ENCODE measurements at regions of chr19 and their contacts with region 1.

Region 1: GRCh38 chr19:33778089-33778791 is 18.4 kb upstream of the KCTD15 start:
- DNase-seq: peak; percentile 69 to 92 (median 81)
- ATAC-seq: peak; percentile 97
- H3K4me3 ChIP-seq: no peak overlapping the region
- H3K4me3 Mint-ChIP-seq: no peak overlapping the region
- H3K27ac ChIP-seq: no peak overlapping the region
- H3K27ac Mint-ChIP-seq: no peak overlapping the region
- H3K4me1 ChIP-seq: peaks cover 31% of the 10 kb centered on the region
- H3K4me1 Mint-ChIP-seq: peaks cover 18% of the 10 kb centered on the region
- H3K27me3 ChIP-seq: peaks cover 8 to 19% of the 10 kb centered on the region in 2 experiments
- H3K27me3 Mint-ChIP-seq: peaks cover 36% of the 10 kb centered on the region
- CTCF ChIP-seq: peak; percentile 100

Region 2: GRCh38 chr19:33416307-33417215 is 361.7 kb before region 1 on chr19:
- CTCF ChIA-PET with region 1: interaction called, 11 read pairs
- POLR2A ChIA-PET with region 1: no interaction called
- intact Hi-C with region 1: no loop called
- DNase-seq: peak; percentile 43 to 80 (median 64)
- ATAC-seq: peak; percentile 85
- H3K4me3 ChIP-seq: peak overlapping the region; percentile 42
- H3K4me3 Mint-ChIP-seq: peak overlapping the region; percentile 47
- H3K27ac ChIP-seq: no peak overlapping the region
- H3K27ac Mint-ChIP-seq: no peak overlapping the region
- H3K4me1 ChIP-seq: peaks cover 9% of the 10 kb centered on the region
- H3K4me1 Mint-ChIP-seq: peaks cover 4% of the 10 kb centered on the region
- H3K27me3 ChIP-seq: no peaks in the 10 kb centered on the region
- H3K27me3 Mint-ChIP-seq: no peaks in the 10 kb centered on the region
- CTCF ChIP-seq: peak; percentile 76

Region 3: GRCh38 chr19:33749619-33750175 is 28.5 kb before region 1 on chr19:
- CTCF ChIA-PET with region 1: no interaction called
- POLR2A ChIA-PET with region 1: no interaction called
- intact Hi-C with region 1: no loop called
- DNase-seq: no peak
- ATAC-seq: no peak
- H3K4me3 ChIP-seq: no peak overlapping the region
- H3K4me3 Mint-ChIP-seq: no peak overlapping the region
- H3K27ac ChIP-seq: no peak overlapping the region
- H3K27ac Mint-ChIP-seq: no peak overlapping the region
- H3K4me1 ChIP-seq: no peaks in the 10 kb centered on the region
- H3K4me1 Mint-ChIP-seq: no peaks in the 10 kb centered on the region
- H3K27me3 ChIP-seq: peaks cover 4 to 5% of the 10 kb centered on the region in 2 experiments
- H3K27me3 Mint-ChIP-seq: peaks cover 23% of the 10 kb centered on the region
- CTCF ChIP-seq: no peak

Region 4: GRCh38 chr19:33795370-33796163 is 17.3 kb after region 1 on chr19:
- CTCF ChIA-PET with region 1: interaction called, 27 read pairs
- POLR2A ChIA-PET with region 1: interaction called, 4 read pairs
- intact Hi-C with region 1: no loop called
- DNase-seq: peak in 7 of 14 experiments; percentile 23 to 67 (median 33)
- ATAC-seq: peak; percentile 44
- H3K4me3 ChIP-seq: peak overlapping the region; percentile 44
- H3K4me3 Mint-ChIP-seq: peak overlapping the region; percentile 71
- H3K27ac ChIP-seq: no peak overlapping the region
- H3K27ac Mint-ChIP-seq: no peak overlapping the region
- H3K4me1 ChIP-seq: peaks cover 31% of the 10 kb centered on the region
- H3K4me1 Mint-ChIP-seq: no peaks in the 10 kb centered on the region
- H3K27me3 ChIP-seq: peaks cover 19 to 37% of the 10 kb centered on the region in 2 experiments
- H3K27me3 Mint-ChIP-seq: peaks cover 50% of the 10 kb centered on the region
- CTCF ChIP-seq: peak; percentile 39

Region 5: GRCh38 chr19:33998739-33999345 is 220.6 kb after region 1 on chr19:
- CTCF ChIA-PET with region 1: interaction called, 11 read pairs
- POLR2A ChIA-PET with region 1: no interaction called
- intact Hi-C with region 1: loop called (anchors 2 to 5 kb)
- DNase-seq: peak in 1 of 14 experiments; percentile 10
- ATAC-seq: no peak
- H3K4me3 ChIP-seq: no peak overlapping the region
- H3K4me3 Mint-ChIP-seq: no peak overlapping the region
- H3K27ac ChIP-seq: no peak overlapping the region
- H3K27ac Mint-ChIP-seq: no peak overlapping the region
- H3K4me1 ChIP-seq: no peaks in the 10 kb centered on the region
- H3K4me1 Mint-ChIP-seq: no peaks in the 10 kb centered on the region
- H3K27me3 ChIP-seq: peaks cover 0 to 4% of the 10 kb centered on the region in 2 experiments
- H3K27me3 Mint-ChIP-seq: peaks cover 28% of the 10 kb centered on the region
- CTCF ChIP-seq: peak; percentile 40

Region 6: GRCh38 chr19:34096020-34096915 is 318.0 kb after region 1 on chr19:
- CTCF ChIA-PET with region 1: interaction called, 28 read pairs
- POLR2A ChIA-PET with region 1: no interaction called
- intact Hi-C with region 1: loop called (anchors 1 kb)
- DNase-seq: peak in 3 of 14 experiments; percentile 40 to 57 (median 53)
- ATAC-seq: no peak
- H3K4me3 ChIP-seq: no peak overlapping the region
- H3K4me3 Mint-ChIP-seq: no peak overlapping the region
- H3K27ac ChIP-seq: no peak overlapping the region
- H3K27ac Mint-ChIP-seq: no peak overlapping the region
- H3K4me1 ChIP-seq: no peaks in the 10 kb centered on the region
- H3K4me1 Mint-ChIP-seq: peaks cover 5% of the 10 kb centered on the region
- H3K27me3 ChIP-seq: peaks cover 0 to 6% of the 10 kb centered on the region in 2 experiments
- H3K27me3 Mint-ChIP-seq: peaks cover 24% of the 10 kb centered on the region
- CTCF ChIP-seq: peak; percentile 66

Region 7: DNA sequence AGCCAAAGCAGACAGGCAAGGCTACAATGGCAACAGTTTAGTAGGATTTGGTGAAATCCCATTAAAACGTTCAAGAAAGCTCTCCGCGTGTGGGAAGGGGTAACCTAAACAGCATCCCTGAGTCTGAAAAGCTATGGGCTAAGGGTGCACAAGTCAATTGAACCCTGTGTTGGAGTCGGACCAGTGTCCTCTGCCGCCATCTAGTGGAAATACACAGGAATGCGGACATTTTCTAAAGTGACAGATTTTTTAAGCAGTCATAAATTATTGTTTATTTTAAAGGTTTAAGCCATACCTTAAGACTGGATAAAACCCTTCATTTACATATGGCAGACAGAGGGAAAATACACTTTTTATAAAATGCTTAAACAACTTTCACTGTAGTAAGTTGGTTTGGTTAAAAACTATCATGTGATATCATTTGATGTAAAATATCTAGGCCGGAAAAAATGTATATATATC is 367.5 kb after region 1 on chr19:
- CTCF ChIA-PET with region 1: interaction called, 8 read pairs
- POLR2A ChIA-PET with region 1: no interaction called
- intact Hi-C with region 1: loop called in 1 of 2 experiments (anchors 1 kb)
- DNase-seq: peak; percentile 23 to 80 (median 40)
- ATAC-seq: peak; percentile 78
- H3K4me3 ChIP-seq: no peak overlapping the region
- H3K4me3 Mint-ChIP-seq: no peak overlapping the region
- H3K27ac ChIP-seq: no peak overlapping the region
- H3K27ac Mint-ChIP-seq: no peak overlapping the region
- H3K4me1 ChIP-seq: no peaks in the 10 kb centered on the region
- H3K4me1 Mint-ChIP-seq: no peaks in the 10 kb centered on the region
- H3K27me3 ChIP-seq: no peaks in the 10 kb centered on the region
- H3K27me3 Mint-ChIP-seq: no peaks in the 10 kb centered on the region
- CTCF ChIP-seq: peak; percentile 91

Region 8: GRCh38 chr19:34712395-34713261 is 934.4 kb after region 1 on chr19:
- CTCF ChIA-PET with region 1: interaction called, 3 read pairs
- POLR2A ChIA-PET with region 1: no interaction called
- intact Hi-C with region 1: loop called (anchors 5 kb)
- DNase-seq: peak in 13 of 14 experiments; percentile 8 to 89 (median 41)
- ATAC-seq: peak; percentile 67
- H3K4me3 ChIP-seq: no peak overlapping the region
- H3K4me3 Mint-ChIP-seq: no peak overlapping the region
- H3K27ac ChIP-seq: no peak overlapping the region
- H3K27ac Mint-ChIP-seq: no peak overlapping the region
- H3K4me1 ChIP-seq: no peaks in the 10 kb centered on the region
- H3K4me1 Mint-ChIP-seq: no peaks in the 10 kb centered on the region
- H3K27me3 ChIP-seq: peaks cover under 1 to 13% of the 10 kb centered on the region in 2 experiments
- H3K27me3 Mint-ChIP-seq: peaks cover 40% of the 10 kb centered on the region
- CTCF ChIP-seq: peak; percentile 69

Measured in CD4-positive, alpha-beta T cell (primary cell).